MCF 10A (cell line): ENCODE measurements at regions of chr10 and their contacts with region 1.

Region 1: DNA sequence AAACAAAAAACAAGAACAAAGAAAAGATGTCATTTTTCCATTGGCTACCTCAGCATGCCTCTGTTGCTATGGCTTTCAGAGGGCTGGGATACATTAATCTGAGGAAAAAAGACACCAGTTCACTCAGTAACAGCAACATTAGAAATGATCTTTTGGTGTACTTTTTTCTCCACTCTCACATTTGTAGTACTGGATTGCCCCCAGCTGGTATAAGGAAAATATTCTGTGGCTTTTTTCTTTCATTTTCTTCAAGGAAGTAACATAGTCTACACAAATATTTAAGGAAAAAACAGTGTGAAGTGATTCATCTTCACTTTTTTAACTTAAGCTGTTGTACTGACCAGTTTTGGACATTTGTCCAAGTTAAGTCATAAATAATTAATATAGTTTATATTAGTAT is 482.3 kb downstream of the SORCS1 start:
- DNase-seq: peak; percentile 31
- H3K4me3 Mint-ChIP-seq: no peak overlapping the region
- H3K27ac Mint-ChIP-seq: no peak overlapping the region
- H3K4me1 Mint-ChIP-seq: peaks cover 8% of the 10 kb centered on the region
- H3K27me3 Mint-ChIP-seq: no peaks in the 10 kb centered on the region
- CTCF ChIP-seq: peak; percentile 32

Region 2: GRCh38 chr10:106311590-106311989 is 370.6 kb before region 1 on chr10:
- CTCF ChIA-PET with region 1: no interaction called
- POLR2A ChIA-PET with region 1: no interaction called
- intact Hi-C with region 1: no loop called
- DNase-seq: no peak
- H3K4me3 Mint-ChIP-seq: no peak overlapping the region
- H3K27ac Mint-ChIP-seq: no peak overlapping the region
- H3K4me1 Mint-ChIP-seq: no peaks in the 10 kb centered on the region
- H3K27me3 Mint-ChIP-seq: no peaks in the 10 kb centered on the region
- CTCF ChIP-seq: no peak

Region 3: GRCh38 chr10:106401161-106401560 is 281.0 kb before region 1 on chr10:
- CTCF ChIA-PET with region 1: interaction called, 3 read pairs
- POLR2A ChIA-PET with region 1: no interaction called
- intact Hi-C with region 1: loop called (anchors 1 kb)
- DNase-seq: peak; percentile 59
- H3K4me3 Mint-ChIP-seq: no peak overlapping the region
- H3K27ac Mint-ChIP-seq: no peak overlapping the region
- H3K4me1 Mint-ChIP-seq: peaks cover 11% of the 10 kb centered on the region
- H3K27me3 Mint-ChIP-seq: no peaks in the 10 kb centered on the region
- CTCF ChIP-seq: peak; percentile 59

Region 4: GRCh38 chr10:106775127-106775526 is 93.0 kb after region 1 on chr10:
- CTCF ChIA-PET with region 1: no interaction called
- POLR2A ChIA-PET with region 1: no interaction called
- intact Hi-C with region 1: no loop called
- DNase-seq: peak; percentile 52
- H3K4me3 Mint-ChIP-seq: no peak overlapping the region
- H3K27ac Mint-ChIP-seq: no peak overlapping the region
- H3K4me1 Mint-ChIP-seq: no peaks in the 10 kb centered on the region
- H3K27me3 Mint-ChIP-seq: no peaks in the 10 kb centered on the region
- CTCF ChIP-seq: no peak

Region 5: GRCh38 chr10:106931159-106931852 is 249.1 kb after region 1 on chr10:
- CTCF ChIA-PET with region 1: no interaction called
- POLR2A ChIA-PET with region 1: no interaction called
- intact Hi-C with region 1: no loop called
- DNase-seq: peak; percentile 2
- H3K4me3 Mint-ChIP-seq: no peak overlapping the region
- H3K27ac Mint-ChIP-seq: no peak overlapping the region
- H3K4me1 Mint-ChIP-seq: no peaks in the 10 kb centered on the region
- H3K27me3 Mint-ChIP-seq: no peaks in the 10 kb centered on the region
- CTCF ChIP-seq: no peak